Mammary epithelial cell (primary cell): ENCODE measurements at regions of chr2 and their contacts with region 1.

Region 1: GRCh38 chr2:175684457-175684856 is 317.6 kb downstream of the LNPK start:
- DNase-seq: peak; percentile 1
- H3K4me3 ChIP-seq: no peak overlapping the region
- H3K27ac ChIP-seq: no peak overlapping the region
- H3K4me1 ChIP-seq: no peaks in the 10 kb centered on the region
- H3K27me3 ChIP-seq: peaks cover 3% of the 10 kb centered on the region
- CTCF ChIP-seq: no peak

Region 2: GRCh38 chr2:175414882-175415487 is 269.5 kb before region 1 on chr2:
- CTCF ChIA-PET with region 1: no interaction called
- dilution Hi-C with region 1: no loop called
- in situ Hi-C with region 1: no loop called
- intact Hi-C with region 1: loop called (anchors 10 kb)
- DNase-seq: peak; percentile 41
- H3K4me3 ChIP-seq: no peak overlapping the region
- H3K27ac ChIP-seq: no peak overlapping the region
- H3K4me1 ChIP-seq: no peaks in the 10 kb centered on the region
- H3K27me3 ChIP-seq: no peaks in the 10 kb centered on the region
- CTCF ChIP-seq: peak; percentile 48 to 57

Region 3: DNA sequence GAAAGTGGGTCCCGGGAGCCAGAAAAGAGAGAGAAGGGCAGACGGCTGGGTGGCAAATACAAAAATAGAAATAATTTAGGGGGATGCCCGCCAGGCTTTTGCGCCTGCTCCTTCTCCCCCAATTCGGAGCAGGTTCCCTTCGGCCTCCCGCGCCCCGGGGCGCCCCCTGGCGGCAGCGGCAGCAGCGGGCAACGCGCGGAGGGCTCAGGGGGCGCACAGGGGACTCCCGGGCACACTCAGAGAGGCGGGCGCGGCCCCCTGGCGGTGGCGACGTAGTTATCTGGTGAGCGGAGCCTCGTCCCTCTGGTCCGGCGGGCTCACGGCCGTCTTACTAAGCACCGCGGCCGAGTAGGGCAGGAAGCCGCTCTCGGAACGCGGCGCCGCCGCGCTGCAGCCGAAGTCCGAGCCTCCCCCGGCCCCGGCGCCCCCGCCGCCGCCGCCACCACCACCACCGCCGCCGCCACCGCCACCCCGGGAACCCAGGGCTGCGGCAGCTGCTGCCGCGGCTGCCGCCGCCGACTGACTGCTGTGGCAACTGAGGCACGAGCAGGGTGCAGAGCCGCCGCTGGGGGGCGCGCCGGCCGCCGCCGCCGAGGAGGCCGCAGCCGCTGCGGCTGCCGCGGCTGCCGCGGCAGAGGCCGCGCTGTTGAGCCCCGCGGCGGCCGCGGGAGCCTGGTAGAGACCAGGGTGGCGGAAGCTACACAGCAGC is 395.5 kb after region 1 on chr2:
- CTCF ChIA-PET with region 1: no interaction called
- dilution Hi-C with region 1: no loop called
- in situ Hi-C with region 1: loop called (anchors 10 kb)
- intact Hi-C with region 1: no loop called
- DNase-seq: no peak
- H3K4me3 ChIP-seq: no peak overlapping the region
- H3K27ac ChIP-seq: no peak overlapping the region
- H3K4me1 ChIP-seq: peaks cover 6% of the 10 kb centered on the region
- H3K27me3 ChIP-seq: peaks cover 81% of the 10 kb centered on the region
- CTCF ChIP-seq: peak; percentile 24 to 60